Activated CD4-positive, alpha-beta memory T cell treated with anti-CD3 and anti-CD28 coated beads, Interleukin-2, amount 10 ng/mL, durations not matched to agents 7 days and 5 days (primary cell): ENCODE measurements at regions of chr15 and their contacts with region 1.

Region 1: DNA sequence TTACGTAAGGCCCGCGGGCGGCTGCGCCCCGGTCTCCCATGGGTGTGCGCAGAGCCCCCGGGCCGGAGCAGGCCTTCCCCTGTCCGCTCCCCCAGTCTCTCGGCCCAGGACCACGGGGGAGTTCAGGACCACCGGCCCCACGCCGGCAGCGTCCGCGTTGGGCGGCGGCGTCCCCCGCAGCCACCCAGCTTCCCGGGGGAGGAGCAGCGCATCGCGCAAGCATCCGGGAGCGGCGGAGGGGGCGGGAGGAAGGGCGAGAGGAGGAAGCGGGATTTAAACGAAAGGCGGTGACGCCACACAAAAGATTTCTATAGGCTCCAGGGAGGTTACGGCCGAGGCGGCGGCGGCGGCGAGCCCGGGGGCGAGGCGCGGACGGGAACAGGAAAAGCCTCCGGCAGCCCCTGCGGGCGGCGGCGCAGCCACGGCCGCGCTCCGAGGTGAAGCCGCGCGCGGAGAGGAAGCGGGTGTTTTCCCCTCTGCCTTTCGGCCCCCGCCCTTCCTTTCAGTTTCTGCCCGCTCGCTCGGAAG is at the start of gene TLNRD1:
- DNase-seq: peak; percentile 91
- H3K4me3 Mint-ChIP-seq: peak within 1 kb of the TSS; percentile 98
- H3K27ac Mint-ChIP-seq: peak within 1 kb of the TSS; percentile 99
- H3K4me1 Mint-ChIP-seq: peaks cover 60% of the 10 kb centered on the region
- H3K27me3 Mint-ChIP-seq: no peaks in the 10 kb centered on the region
- total RNA-seq, gene TLNRD1: 47.1 to 48.8 TPM

Region 2: DNA sequence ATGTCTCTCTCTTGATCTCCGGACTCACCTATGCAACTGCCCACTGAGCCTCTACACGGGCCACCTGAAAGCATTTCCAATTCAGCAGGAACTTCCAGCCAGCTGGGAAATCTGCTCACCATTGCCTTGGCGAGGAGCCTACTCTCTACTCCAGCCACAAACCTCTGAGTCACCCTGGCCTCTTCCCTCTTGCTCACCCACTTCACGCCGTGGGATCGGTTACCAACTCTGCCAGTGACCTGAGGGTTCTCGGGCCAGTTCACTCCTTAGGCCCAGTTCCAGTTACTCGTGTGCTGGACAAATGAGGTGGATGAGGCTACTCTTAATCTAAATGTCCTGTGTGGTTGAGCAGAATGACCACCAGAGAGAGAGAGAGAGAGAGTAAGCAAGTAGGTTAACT is 151.4 kb before region 1 on chr15:
- CTCF ChIA-PET with region 1: no interaction called
- POLR2A ChIA-PET with region 1: no interaction called
- DNase-seq: no peak
- H3K4me3 Mint-ChIP-seq: no peak overlapping the region
- H3K27ac Mint-ChIP-seq: no peak overlapping the region
- H3K4me1 Mint-ChIP-seq: no peaks in the 10 kb centered on the region
- H3K27me3 Mint-ChIP-seq: peaks cover 18% of the 10 kb centered on the region

Region 3: GRCh38 chr15:80989518-80990478 is 10.9 kb before region 1 on chr15 and contains the start of gene MESD:
- CTCF ChIA-PET with region 1: interaction called, 23 read pairs
- POLR2A ChIA-PET with region 1: interaction called, 81 read pairs
- DNase-seq: peak; percentile 98
- H3K4me3 Mint-ChIP-seq: peak within 1 kb of the TSS; percentile 98
- H3K27ac Mint-ChIP-seq: peak within 1 kb of the TSS; percentile 91
- H3K4me1 Mint-ChIP-seq: peaks cover 62% of the 10 kb centered on the region
- H3K27me3 Mint-ChIP-seq: no peaks in the 10 kb centered on the region
- total RNA-seq, gene MESD: 34.5 to 36.1 TPM

Region 4: GRCh38 chr15:81023483-81024264 is 23.0 kb after region 1 on chr15:
- CTCF ChIA-PET with region 1: interaction called, 3 read pairs
- POLR2A ChIA-PET with region 1: interaction called, 50 read pairs
- DNase-seq: peak; percentile 51
- H3K4me3 Mint-ChIP-seq: peak overlapping the region; percentile 37
- H3K27ac Mint-ChIP-seq: peak overlapping the region; percentile 90
- H3K4me1 Mint-ChIP-seq: peaks cover 51% of the 10 kb centered on the region
- H3K27me3 Mint-ChIP-seq: no peaks in the 10 kb centered on the region

Region 5: GRCh38 chr15:81073801-81074200 is 73.1 kb after region 1 on chr15:
- CTCF ChIA-PET with region 1: no interaction called
- POLR2A ChIA-PET with region 1: interaction called, 20 read pairs
- DNase-seq: no peak
- H3K4me3 Mint-ChIP-seq: no peak overlapping the region
- H3K27ac Mint-ChIP-seq: no peak overlapping the region
- H3K4me1 Mint-ChIP-seq: peaks cover 36% of the 10 kb centered on the region
- H3K27me3 Mint-ChIP-seq: peaks cover 3% of the 10 kb centered on the region

Region 6: DNA sequence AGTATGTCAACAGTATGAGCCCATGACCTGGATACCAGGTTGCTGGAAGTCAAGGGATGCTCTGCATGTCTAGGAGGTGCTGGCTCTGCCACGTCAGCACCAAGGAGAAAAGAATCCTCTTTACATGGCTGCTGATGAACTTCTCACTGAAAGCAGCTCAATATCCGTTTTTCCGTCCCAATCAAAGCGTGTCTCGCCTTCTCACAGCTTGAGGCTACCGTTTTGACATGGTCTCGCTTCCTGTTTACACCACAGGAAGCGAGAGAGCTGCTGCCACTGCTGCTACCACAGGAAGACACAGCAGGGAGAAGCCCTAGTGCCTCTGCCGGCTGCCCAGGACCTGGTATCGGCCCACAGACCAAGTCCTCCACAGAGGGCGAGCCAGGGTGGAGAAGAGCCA is 296.0 kb after region 1 on chr15:
- CTCF ChIA-PET with region 1: interaction called, 3 read pairs
- POLR2A ChIA-PET with region 1: interaction called, 40 read pairs
- DNase-seq: peak; percentile 87
- H3K4me3 Mint-ChIP-seq: peak overlapping the region; percentile 98
- H3K27ac Mint-ChIP-seq: peak overlapping the region; percentile 96
- H3K4me1 Mint-ChIP-seq: peaks cover 64% of the 10 kb centered on the region
- H3K27me3 Mint-ChIP-seq: no peaks in the 10 kb centered on the region